GM18951 (cell line): ENCODE measurements at regions of chr4 and their contacts with region 1.

Region 1: DNA sequence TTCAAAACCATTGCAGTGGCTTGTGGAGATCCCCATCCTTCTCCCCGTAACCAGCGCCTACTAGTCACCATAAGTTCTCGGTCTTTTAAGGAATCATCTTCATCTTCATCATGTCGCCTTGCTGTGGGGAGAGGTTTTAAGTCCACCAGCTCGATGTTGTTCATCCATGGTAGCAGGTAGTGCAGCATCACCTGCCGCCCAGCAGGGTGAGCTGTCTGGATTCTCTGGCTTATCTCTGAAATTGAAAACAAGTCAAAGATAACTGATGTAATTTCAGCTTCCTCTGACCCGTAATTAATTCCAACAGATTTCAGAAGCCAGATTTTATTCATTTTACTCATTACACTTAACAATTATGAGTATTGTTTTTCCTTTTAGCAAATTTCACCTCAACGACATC is 67.4 kb downstream of the ZAR1 start:
- POLR2A ChIP-seq: no peak

Region 2: GRCh38 chr4:48129307-48130014 is 428.0 kb before region 1 on chr4:
- in situ Hi-C with region 1: loop called (anchors 10 kb)
- POLR2A ChIP-seq: no peak

Region 3: GRCh38 chr4:48203819-48204218 is 353.7 kb before region 1 on chr4:
- in situ Hi-C with region 1: no loop called
- POLR2A ChIP-seq: peak; percentile 9